ENCODE measurements at regions of chr17 and their contacts with region 1.

Region 1: GRCh38 chr17:7045909-7046724 is 2.2 kb upstream of the SLC16A11 start:
- DNase-seq: no peak
- ATAC-seq: peak in 4 of 8 donors; percentile 26 to 47 (median 36)
- H3K4me3 ChIP-seq: peak overlapping the region in 7 of 10 donors; percentile 15 to 37 (median 31)
- H3K27ac ChIP-seq: peak overlapping the region in 1 of 10 donors; percentile 45
- H3K4me1 ChIP-seq: peaks cover 9 to 44% (median 37%) of the 10 kb centered on the region in 9 donors
- H3K27me3 ChIP-seq: peaks cover 5 to 63% (median 33%) of the 10 kb centered on the region in 7 donors
- CTCF ChIP-seq: peak; percentile 52 to 89 (median 84)

Region 2: GRCh38 chr17:7177196-7177953 is 131.3 kb after region 1 on chr17:
- intact Hi-C with region 1: loop called in 4 of 10 experiments (anchors 5 kb)
- DNase-seq: peak; percentile 50 to 65
- ATAC-seq: peak; percentile 66 to 90 (median 82)
- H3K4me3 ChIP-seq: peak overlapping the region in 9 of 10 donors; percentile 14 to 59 (median 44)
- H3K27ac ChIP-seq: peak overlapping the region in 1 of 10 donors; percentile 37
- H3K4me1 ChIP-seq: peaks cover 0 to 27% (median 16%) of the 10 kb centered on the region in 9 donors
- H3K27me3 ChIP-seq: peaks cover 0 to 37% (median 24%) of the 10 kb centered on the region in 7 donors
- CTCF ChIP-seq: peak; percentile 77 to 93 (median 89)

Region 3: GRCh38 chr17:7296189-7296902 is 250.2 kb after region 1 on chr17:
- intact Hi-C with region 1: loop called in 9 of 10 experiments (anchors 1 to 10 kb)
- DNase-seq: peak; percentile 81 to 88
- ATAC-seq: peak; percentile 71 to 93 (median 78)
- H3K4me3 ChIP-seq: peak overlapping the region in 7 of 10 donors; percentile 7 to 32 (median 14)
- H3K27ac ChIP-seq: peak overlapping the region; percentile 35 to 85 (median 80)
- H3K4me1 ChIP-seq: peaks cover 18 to 53% (median 49%) of the 10 kb centered on the region in 9 donors
- H3K27me3 ChIP-seq: peaks cover 0 to 57% (median 34%) of the 10 kb centered on the region in 7 donors
- CTCF ChIP-seq: peak; percentile 91 to 99 (median 96)

Measured in heart right ventricle (tissue), 16 donors.